A549 (cell line): ENCODE measurements at regions of chr19 and their contacts with region 1.

Region 1: GRCh38 chr19:17981611-17982010 is 14.7 kb downstream of the KCNN1 start:
- DNase-seq: no peak
- ATAC-seq: no peak
- H3K4me3 ChIP-seq: no peak overlapping the region
- H3K27ac ChIP-seq: no peak overlapping the region
- H3K4me1 ChIP-seq: no peaks in the 10 kb centered on the region
- CTCF ChIP-seq: no peak
- EP300 ChIP-seq: no peak
- POLR2A ChIP-seq: no peak
- RAD21 ChIP-seq: no peak

Region 2: DNA sequence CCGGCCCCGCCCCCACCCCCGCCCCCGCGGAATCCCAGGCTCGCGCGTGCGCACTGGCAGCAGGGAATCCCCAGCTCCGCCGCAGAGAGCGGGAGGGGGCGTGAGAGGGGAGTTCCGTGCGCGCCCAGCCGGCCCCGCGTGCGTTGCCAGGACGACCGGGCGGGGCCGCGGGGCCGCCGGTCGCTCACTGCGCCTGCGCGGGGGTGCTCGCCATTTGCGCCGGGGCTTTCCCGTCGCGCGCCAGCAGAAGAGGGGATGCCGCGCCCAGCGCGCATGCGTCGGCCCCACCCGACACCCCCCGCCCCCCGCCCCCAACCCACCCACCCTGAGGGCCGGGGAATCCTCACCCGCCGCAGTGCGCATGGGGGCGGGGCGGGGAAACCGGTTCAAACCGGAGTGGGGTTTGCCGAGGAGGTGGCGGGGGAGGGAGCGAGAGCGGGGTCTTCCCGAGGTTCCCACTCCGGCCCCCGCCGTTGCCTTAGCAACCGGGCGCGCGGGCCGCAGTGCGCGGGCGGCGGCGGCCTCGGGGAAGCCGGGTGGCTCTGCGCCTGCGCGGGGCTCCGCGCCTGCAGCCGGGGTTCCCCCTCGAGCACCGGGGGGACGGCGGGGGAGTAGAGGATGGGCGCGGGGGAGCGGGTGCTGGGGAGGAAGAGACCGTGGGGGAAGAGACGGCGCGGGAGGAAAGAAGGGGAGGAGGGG is 33.6 kb before region 1 on chr19:
- CTCF ChIA-PET with region 1: interaction called, 14 read pairs
- POLR2A ChIA-PET with region 1: interaction called, 5 read pairs
- DNase-seq: peak; percentile 85 to 90
- ATAC-seq: peak; percentile 51 to 62
- H3K4me3 ChIP-seq: peak overlapping the region; percentile 52
- H3K27ac ChIP-seq: peak overlapping the region; percentile 82 to 98
- H3K4me1 ChIP-seq: peaks cover 42% of the 10 kb centered on the region
- CTCF ChIP-seq: no peak
- EP300 ChIP-seq: no peak
- POLR2A ChIP-seq: no peak
- RAD21 ChIP-seq: no peak

Region 3: DNA sequence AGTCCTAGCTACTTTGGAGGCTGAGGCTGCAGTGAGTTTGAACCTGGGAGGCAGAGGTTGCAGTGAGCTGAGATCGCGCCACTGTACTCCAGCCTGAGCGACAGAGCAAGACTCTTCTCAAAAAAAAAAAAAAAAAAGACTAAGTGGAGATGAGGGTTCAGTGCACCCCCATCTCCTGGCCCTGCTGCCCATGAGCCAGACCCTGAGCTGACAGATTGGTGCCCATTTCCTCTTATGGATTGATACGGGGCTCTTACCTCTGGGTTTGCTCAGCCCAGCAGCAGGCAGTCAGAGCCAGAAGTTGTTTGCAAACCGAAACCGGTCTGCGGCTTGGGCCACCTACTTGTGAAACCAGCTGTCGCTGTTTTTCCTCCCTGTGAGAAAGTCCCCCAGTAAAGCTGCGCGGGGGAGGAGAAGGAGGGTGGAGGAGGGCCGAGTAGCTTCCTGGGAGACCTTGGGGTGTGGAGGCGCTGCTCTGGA is 63.3 kb after region 1 on chr19:
- CTCF ChIA-PET with region 1: no interaction called
- POLR2A ChIA-PET with region 1: no interaction called
- DNase-seq: peak in 1 of 2 experiments; percentile 27
- ATAC-seq: no peak; a peak in 1 of 6 replicates
- H3K4me3 ChIP-seq: no peak overlapping the region
- H3K27ac ChIP-seq: peak overlapping the region in 1 of 2 experiments; percentile 73; a peak in 4 of 6 replicates
- H3K4me1 ChIP-seq: peaks cover 19% of the 10 kb centered on the region
- CTCF ChIP-seq: no peak
- EP300 ChIP-seq: no peak
- POLR2A ChIP-seq: no peak
- RAD21 ChIP-seq: no peak